ENCODE measurements at regions of chr1 and their contacts with region 1.

Region 1: GRCh38 chr1:65067491-65068201 is 80.4 kb upstream of the AK4 start:
- DNase-seq: peak; percentile 48 to 75 (median 67)
- ATAC-seq: peak; percentile 39
- H3K4me3 ChIP-seq: peak overlapping the region; percentile 78
- H3K4me3 Mint-ChIP-seq: peak overlapping the region; percentile 85 to 99 (median 97)
- H3K27ac ChIP-seq: peak overlapping the region; percentile 90
- H3K27ac Mint-ChIP-seq: peak overlapping the region; percentile 93 to 100 (median 100)
- H3K4me1 ChIP-seq: peaks cover 16 to 24% of the 10 kb centered on the region in 2 donors
- H3K4me1 Mint-ChIP-seq: peaks cover 43 to 62% (median 55%) of the 10 kb centered on the region in 7 donors
- H3K27me3 ChIP-seq: no peaks in the 10 kb centered on the region
- H3K27me3 Mint-ChIP-seq: no peaks in the 10 kb centered on the region

Region 2: DNA sequence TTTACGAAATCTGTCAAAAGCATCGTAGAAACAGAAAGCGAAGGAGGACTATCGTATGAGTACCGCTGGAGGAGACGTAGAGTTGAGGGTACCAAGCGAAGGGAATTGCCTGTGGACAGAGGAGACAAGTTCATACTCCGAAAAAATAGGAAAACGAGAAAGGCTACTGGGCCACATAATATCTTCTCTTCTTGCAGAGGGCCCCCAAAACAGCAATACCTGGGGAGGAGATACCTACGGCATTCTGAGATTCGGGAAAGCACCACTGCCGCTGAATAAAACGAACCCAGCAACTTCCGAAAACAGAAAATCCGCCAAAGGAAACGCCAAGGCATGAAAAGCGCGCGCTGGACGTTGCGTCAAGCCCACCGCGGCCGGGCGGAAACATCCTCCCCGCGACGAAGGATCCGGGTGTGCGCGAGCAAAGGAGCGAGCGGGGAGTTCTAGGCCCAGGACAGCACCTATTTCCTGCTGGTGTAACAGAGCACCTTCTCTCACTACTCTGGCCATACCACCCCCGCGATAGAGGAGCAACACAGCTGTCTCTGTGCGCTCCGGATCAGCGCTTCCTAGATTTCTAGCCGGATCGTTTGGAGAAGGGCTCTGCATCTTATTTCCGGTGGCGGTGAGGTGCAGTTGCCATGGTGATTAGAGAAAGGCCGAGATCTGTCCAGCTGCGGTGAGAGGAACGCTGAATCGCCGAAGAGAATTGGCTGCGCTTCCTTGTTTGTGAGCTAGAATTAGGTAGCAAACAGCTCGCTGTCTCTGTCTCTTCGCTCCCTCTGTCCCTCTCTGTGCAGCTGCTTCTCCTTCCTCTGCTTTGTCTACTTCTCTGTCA is 1544.5 kb before region 1 on chr1 and contains the starts of genes EFCAB7 and ITGB3BP:
- CTCF ChIA-PET with region 1: no interaction called
- POLR2A ChIA-PET with region 1: no interaction called
- intact Hi-C with region 1: loop called (anchors 1 to 2 kb)
- DNase-seq: peak; percentile 73 to 86 (median 82)
- ATAC-seq: peak; percentile 92
- H3K4me3 ChIP-seq: peak within 1 kb of the TSS; percentile 83
- H3K4me3 Mint-ChIP-seq: peak within 1 kb of the TSS; percentile 82 to 100 (median 98)
- H3K27ac ChIP-seq: peak within 1 kb of the TSS; percentile 78
- H3K27ac Mint-ChIP-seq: peak within 1 kb of the TSS; percentile 93 to 99 (median 97)
- H3K4me1 ChIP-seq: peaks cover 7 to 13% of the 10 kb centered on the region in 2 donors
- H3K4me1 Mint-ChIP-seq: peaks cover 12 to 47% (median 36%) of the 10 kb centered on the region in 7 donors
- H3K27me3 ChIP-seq: no peaks in the 10 kb centered on the region
- H3K27me3 Mint-ChIP-seq: peaks cover 0 to 2% (median 0%) of the 10 kb centered on the region in 5 donors
- total RNA-seq, gene EFCAB7: 4.1 to 13.5 (median 9.2) TPM
- total RNA-seq, gene ITGB3BP: 16.5 to 52.6 (median 32.9) TPM

Region 3: GRCh38 chr1:64553281-64553680 is 514.4 kb before region 1 on chr1:
- CTCF ChIA-PET with region 1: no interaction called
- POLR2A ChIA-PET with region 1: no interaction called
- intact Hi-C with region 1: loop called in 1 of 2 experiments (anchors 5 kb)
- DNase-seq: peak in 2 of 9 donors; percentile 12 to 16
- ATAC-seq: no peak
- H3K4me3 ChIP-seq: no peak overlapping the region
- H3K4me3 Mint-ChIP-seq: peak overlapping the region in 3 of 10 donors; percentile 6 to 18 (median 18)
- H3K27ac ChIP-seq: no peak overlapping the region
- H3K27ac Mint-ChIP-seq: peak overlapping the region in 7 of 9 donors; percentile 4 to 91 (median 70)
- H3K4me1 ChIP-seq: peaks cover 0 to 25% of the 10 kb centered on the region in 2 donors
- H3K4me1 Mint-ChIP-seq: peaks cover 20 to 81% (median 57%) of the 10 kb centered on the region in 7 donors
- H3K27me3 ChIP-seq: no peaks in the 10 kb centered on the region
- H3K27me3 Mint-ChIP-seq: peaks cover 0 to 57% (median 0%) of the 10 kb centered on the region in 5 donors

Region 4: DNA sequence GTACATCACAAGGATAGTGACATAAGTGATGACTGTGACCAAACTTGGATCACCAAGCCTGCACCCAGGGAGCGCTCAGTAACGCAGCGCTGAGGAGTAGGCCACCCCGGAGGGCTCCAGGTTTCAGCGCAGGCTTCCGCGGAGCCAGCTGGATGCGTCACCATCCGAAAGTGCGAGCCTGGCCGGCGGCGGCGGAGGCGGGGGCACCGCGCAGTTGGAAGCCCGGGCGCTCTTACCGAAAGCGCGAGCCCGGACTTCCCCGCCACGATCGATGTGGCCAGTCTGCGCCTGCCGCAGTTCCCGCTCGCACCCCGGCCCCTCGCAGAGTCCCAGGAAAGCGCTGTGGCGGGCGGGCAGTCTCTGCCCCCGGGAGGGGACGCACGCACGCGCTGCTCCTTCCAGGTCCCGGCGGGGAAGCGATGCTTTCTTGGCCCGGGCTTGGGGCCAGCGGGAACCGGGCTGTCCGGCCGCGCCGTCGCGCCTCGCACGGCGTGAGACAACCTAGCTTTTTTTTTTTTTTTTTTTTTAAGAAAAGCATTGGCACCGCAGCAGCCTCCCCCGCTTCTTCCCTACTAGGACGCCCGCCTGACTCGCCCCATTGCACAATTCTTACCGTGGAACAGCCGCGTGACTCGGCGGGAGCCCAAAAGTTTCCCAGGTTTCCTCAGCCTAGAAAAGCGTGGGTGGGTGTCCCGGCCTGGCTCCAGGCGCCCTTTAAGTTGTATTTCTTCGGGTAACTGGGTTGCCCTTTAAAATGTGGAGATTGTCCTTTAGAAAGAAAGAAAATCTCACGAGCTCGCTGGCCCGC is 64.9 kb before region 1 on chr1:
- CTCF ChIA-PET with region 1: no interaction called
- POLR2A ChIA-PET with region 1: interaction called, 8 read pairs
- intact Hi-C with region 1: loop called (anchors 1 to 2 kb)
- DNase-seq: peak; percentile 58 to 81 (median 67)
- ATAC-seq: peak; percentile 90
- H3K4me3 ChIP-seq: peak overlapping the region; percentile 56
- H3K4me3 Mint-ChIP-seq: peak overlapping the region; percentile 77 to 93 (median 86)
- H3K27ac ChIP-seq: peak overlapping the region; percentile 66
- H3K27ac Mint-ChIP-seq: peak overlapping the region; percentile 24 to 95 (median 82)
- H3K4me1 ChIP-seq: peaks cover 16 to 19% of the 10 kb centered on the region in 2 donors
- H3K4me1 Mint-ChIP-seq: peaks cover 8 to 44% (median 28%) of the 10 kb centered on the region in 7 donors
- H3K27me3 ChIP-seq: no peaks in the 10 kb centered on the region
- H3K27me3 Mint-ChIP-seq: peaks cover 0 to 33% (median 0%) of the 10 kb centered on the region in 5 donors

Region 5: DNA sequence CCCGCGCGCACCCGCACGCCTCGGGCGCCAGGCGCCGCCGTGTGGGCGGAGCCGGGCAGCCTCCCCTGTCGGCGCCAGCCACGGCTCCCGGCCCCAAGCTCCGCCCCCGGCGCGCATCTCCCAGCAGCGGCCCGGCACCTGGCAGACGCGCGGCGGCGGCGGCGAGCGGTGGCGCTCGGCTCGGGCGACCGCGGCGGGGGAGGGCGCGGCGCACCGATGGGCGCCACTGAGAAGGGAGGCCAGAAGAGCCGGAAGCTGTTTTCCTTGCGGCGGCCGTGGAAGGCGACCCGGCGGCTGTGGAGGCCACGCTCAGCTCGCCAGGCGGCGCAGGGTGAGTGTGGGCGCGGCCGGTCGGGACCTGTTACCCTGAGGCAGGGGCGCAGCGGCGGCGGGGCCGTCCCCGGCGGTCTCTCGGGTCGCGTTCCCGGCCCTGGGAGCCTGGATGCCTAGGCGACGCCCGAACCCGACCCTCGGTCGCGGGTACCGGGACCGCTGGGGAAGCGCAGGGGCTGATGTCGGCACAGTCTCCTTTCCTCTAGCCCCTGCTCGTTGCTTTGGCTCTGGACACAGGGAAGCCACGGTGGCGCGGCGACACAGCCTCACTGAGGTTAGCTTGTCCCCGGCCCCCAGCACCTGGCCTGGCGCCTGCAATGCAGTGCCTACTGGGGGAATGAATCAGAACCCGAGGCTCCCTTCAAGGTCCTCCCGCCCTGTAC is 186.8 kb after region 1 on chr1:
- CTCF ChIA-PET with region 1: no interaction called
- POLR2A ChIA-PET with region 1: interaction called, 5 read pairs
- intact Hi-C with region 1: loop called (anchors 2 to 5 kb)
- DNase-seq: peak; percentile 70 to 90 (median 82)
- ATAC-seq: peak; percentile 97
- H3K4me3 ChIP-seq: peak overlapping the region; percentile 80
- H3K4me3 Mint-ChIP-seq: peak overlapping the region; percentile 87 to 99 (median 92)
- H3K27ac ChIP-seq: peak overlapping the region; percentile 69
- H3K27ac Mint-ChIP-seq: peak overlapping the region in 5 of 9 donors; percentile 10 to 93 (median 78)
- H3K4me1 ChIP-seq: peaks cover 10 to 14% of the 10 kb centered on the region in 2 donors
- H3K4me1 Mint-ChIP-seq: peaks cover 12 to 23% (median 18%) of the 10 kb centered on the region in 7 donors
- H3K27me3 ChIP-seq: no peaks in the 10 kb centered on the region
- H3K27me3 Mint-ChIP-seq: peaks cover 0 to 31% (median 10%) of the 10 kb centered on the region in 5 donors

Region 6: DNA sequence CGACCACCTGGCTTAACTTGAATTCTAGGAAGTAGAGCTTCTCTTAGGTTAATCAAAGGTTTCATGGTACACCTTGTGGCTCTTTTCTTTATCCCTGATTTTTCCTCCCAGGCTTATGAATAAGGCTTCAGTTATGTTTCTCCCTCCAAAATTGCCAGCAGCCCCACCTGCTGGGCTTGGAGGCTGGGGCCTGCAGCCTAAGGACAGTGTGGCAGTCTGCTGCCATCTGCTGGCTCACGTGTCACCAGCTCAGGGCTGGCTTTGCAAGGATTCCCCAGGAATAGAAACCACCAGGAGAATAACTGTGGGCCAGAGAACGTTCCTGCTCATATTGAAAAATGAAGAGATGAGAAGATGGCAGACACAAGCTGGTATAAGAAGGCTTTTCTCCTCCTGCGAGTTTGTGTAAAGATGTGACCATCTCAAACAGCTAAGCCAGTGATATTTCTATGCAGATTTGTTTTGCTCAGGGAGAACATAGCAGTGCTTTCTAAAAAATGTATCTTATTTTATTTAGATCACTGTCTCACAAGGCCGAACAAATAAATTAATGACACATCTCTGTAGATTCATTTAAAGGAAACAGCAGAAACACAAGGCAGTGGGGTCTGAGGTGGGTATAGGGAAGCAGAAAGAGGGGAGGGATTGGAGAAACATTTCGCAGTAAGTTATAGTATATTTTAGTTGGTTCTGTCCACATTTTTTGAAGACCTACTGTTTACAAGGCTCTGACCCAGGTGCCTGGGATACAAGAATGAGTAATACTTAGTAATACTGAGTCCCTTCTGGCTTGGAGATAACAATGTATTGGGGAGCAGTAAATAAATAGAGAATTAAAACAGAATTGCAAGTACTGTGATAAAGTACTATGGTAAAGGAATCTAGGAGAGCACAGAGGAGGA is 1175.3 kb after region 1 on chr1:
- CTCF ChIA-PET with region 1: interaction called, 3 read pairs
- POLR2A ChIA-PET with region 1: no interaction called
- intact Hi-C with region 1: loop called in 1 of 2 experiments (anchors 10 kb)
- DNase-seq: peak; percentile 43 to 75 (median 65)
- ATAC-seq: peak; percentile 93
- H3K4me3 ChIP-seq: no peak overlapping the region
- H3K4me3 Mint-ChIP-seq: no peak overlapping the region
- H3K27ac ChIP-seq: no peak overlapping the region
- H3K27ac Mint-ChIP-seq: no peak overlapping the region
- H3K4me1 ChIP-seq: peaks cover 17 to 36% of the 10 kb centered on the region in 2 donors
- H3K4me1 Mint-ChIP-seq: peaks cover 7 to 31% (median 15%) of the 10 kb centered on the region in 7 donors
- H3K27me3 ChIP-seq: no peaks in the 10 kb centered on the region
- H3K27me3 Mint-ChIP-seq: peaks cover 6 to 7% (median 6%) of the 10 kb centered on the region in 5 donors